ENCODE measurements at regions of chr10 and their contacts with region 1.

Region 1: DNA sequence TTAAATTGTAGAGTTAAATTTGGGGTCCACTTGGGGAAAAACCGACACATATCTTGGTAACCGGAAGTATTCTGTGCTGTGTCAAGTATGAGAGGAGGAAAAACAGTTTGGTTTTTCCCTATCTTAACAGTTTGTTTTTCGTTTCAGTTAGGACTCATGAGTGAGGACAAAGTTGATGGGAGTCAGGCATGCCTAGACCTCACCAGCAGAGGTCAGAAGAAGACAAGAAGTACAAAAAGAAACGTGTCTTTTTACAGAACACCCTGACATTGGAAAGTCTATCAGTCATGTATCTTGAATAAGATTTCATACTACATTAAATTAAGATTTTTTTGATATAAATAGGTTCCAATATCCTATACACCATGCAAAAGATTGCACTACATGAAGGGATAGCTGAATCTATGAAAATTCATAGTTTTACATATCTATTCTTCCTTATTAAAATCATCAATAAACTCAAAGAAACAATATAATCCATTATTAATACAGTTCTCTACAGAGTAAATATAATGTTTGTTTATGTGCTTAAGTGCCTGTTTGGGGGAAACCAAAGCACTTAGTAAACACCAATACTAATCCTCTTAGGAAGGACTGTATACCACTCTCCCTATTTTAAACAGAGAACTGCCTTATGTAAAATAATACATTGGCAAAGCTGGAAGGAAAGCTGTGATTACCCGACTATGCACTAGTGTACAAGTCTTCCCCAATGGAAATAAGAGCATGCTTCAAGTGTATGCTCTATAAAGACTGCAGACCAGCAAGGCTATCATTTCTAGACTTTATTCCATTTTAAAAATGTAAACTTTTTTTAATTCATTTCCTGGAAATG is 95.6 kb downstream of the USP6NL start:
- DNase-seq: peak; percentile 39 to 81 (median 59)
- H3K4me3 ChIP-seq: no peak overlapping the region
- H3K27ac ChIP-seq: no peak overlapping the region
- H3K4me1 ChIP-seq: peaks cover 0 to 10% of the 10 kb centered on the region in 2 donors
- H3K27me3 ChIP-seq: no peaks in the 10 kb centered on the region
- CTCF ChIP-seq: peak; percentile 60 to 91 (median 88)
- POLR2A ChIP-seq: no peak

Region 2: DNA sequence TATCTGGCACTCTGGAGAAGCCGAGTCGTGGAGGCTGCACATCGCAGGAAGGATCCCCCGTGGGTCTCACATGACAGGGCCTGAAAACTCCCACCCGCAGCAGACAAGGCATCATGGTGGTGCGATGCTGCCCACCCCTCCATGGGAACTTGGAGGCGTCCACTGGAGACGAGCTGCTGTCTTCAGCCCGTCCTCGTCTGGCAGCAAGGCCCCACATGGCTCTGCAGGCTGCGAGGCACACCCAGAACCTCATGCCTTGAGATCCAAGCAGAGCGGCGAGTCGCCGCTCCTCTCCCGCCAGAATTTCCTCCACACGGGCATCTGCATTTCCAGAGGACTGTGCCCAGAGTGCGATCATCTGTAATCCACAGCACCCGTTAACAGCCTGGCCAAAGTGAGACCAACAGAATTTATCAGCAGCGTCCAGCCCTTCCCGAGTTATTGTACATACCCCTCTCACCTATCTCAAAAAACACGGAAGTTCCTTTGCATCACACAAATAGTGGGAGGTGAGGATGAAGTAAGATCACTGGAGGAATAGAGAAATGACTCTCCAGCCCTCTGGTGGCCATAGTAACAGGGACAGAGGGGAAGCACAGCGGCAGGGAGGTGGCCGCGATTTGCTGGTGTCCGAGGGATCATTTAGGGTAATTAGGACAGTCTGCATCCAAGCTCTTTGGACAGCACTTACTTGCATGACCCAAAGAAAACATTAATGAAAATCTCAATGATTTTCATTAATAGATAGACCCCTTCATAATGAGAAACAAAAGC is 196.8 kb before region 1 on chr10:
- intact Hi-C with region 1: no loop called
- DNase-seq: no peak
- H3K4me3 ChIP-seq: no peak overlapping the region
- H3K27ac ChIP-seq: no peak overlapping the region
- H3K4me1 ChIP-seq: no peaks in the 10 kb centered on the region
- H3K27me3 ChIP-seq: no peaks in the 10 kb centered on the region
- CTCF ChIP-seq: no peak
- POLR2A ChIP-seq: no peak

Region 3: DNA sequence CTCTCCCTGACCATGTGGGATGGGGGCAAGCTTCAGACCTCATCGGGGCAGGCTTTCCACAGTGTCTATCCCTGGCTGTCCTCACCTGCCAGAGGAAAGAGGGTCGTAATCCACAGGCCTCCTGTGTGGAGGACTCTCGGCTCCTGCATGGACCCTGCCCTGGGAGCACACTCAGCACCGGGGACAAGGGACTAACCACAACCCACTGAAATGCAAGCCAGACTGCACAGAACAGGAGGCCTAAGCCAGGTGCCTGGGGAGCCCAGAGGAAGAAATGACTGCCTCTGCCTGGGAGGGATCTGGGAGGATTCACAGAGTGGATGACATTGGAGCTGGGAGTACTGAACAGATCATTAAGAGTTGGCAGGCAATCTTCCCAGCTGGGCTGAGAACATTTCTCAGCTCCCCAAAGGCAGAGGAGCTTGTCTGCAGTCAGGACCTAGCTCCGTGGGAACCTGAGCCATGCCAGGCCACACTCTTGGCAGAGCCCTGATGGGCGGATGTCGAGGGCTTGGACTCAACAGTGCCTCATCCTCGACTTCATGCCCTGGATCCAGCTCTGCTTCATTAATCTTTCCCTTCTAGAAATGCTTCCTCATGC is 117.7 kb before region 1 on chr10:
- intact Hi-C with region 1: no loop called
- DNase-seq: no peak
- H3K4me3 ChIP-seq: no peak overlapping the region
- H3K27ac ChIP-seq: no peak overlapping the region
- H3K4me1 ChIP-seq: no peaks in the 10 kb centered on the region
- H3K27me3 ChIP-seq: no peaks in the 10 kb centered on the region
- CTCF ChIP-seq: no peak
- POLR2A ChIP-seq: no peak

Region 4: DNA sequence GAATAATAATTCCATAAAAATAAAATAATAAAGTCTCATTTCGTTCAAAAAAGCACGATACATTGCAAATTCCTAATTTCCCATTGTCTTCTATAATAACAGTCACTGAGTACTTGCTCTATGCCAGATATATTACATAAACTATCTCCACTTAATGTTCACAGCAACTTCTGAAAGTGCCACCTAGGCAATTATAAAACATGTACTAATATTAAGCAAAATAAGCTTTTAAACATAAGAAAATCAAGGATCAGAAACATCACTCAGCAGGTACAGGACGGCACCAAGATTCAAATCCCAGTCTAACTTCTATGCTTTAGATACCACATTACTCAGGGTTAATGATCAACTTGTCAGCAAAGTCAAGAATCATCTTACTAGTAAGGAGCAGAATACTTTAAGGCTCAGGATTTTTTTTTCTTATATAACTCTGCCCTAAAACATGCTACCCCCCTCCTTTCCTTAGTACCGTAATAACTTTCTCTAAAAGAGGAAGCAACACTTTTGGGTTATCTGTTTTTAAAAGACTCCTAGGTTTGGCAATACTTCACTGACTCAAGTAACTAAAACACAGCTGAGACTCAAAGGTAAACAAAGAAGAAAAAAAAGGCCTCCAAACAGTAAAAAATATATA is 44.4 kb after region 1 on chr10:
- intact Hi-C with region 1: no loop called
- DNase-seq: no peak
- H3K4me3 ChIP-seq: no peak overlapping the region
- H3K27ac ChIP-seq: no peak overlapping the region
- H3K4me1 ChIP-seq: peaks cover 0 to 17% of the 10 kb centered on the region in 2 donors
- H3K27me3 ChIP-seq: no peaks in the 10 kb centered on the region
- CTCF ChIP-seq: no peak
- POLR2A ChIP-seq: no peak

Region 5: GRCh38 chr10:11724938-11725776 is 209.3 kb after region 1 on chr10:
- intact Hi-C with region 1: loop called (anchors 5 kb)
- DNase-seq: peak in 3 of 7 donors; percentile 29 to 44 (median 39)
- H3K4me3 ChIP-seq: no peak overlapping the region
- H3K27ac ChIP-seq: no peak overlapping the region
- H3K4me1 ChIP-seq: no peaks in the 10 kb centered on the region
- H3K27me3 ChIP-seq: no peaks in the 10 kb centered on the region
- CTCF ChIP-seq: peak; percentile 59 to 88 (median 84)
- POLR2A ChIP-seq: no peak

Measured in adrenal gland (tissue), 19 donors.